Adrenal gland (tissue), 19 donors: ENCODE measurements at regions of chr4 and their contacts with region 1.

Region 1: DNA sequence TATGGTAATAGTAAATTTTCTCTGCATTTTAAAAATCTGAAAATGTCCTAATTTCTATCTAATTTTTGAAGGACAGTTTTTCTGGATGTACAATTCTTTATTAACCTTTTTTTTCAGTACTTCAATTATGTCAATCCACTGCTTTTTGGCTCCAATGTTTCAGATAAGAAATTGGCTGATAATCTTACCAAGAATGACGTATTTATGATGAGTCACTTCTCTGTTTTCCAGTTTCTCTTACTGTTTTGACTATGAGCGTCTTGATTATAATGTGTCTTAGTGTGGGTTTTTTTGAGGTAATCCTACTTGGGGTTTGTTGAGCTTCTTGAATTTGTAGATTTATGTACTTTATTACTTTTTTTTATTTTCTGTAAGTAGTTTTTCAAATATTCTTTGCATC is 47.2 kb downstream of the UGT2B11 start:
- DNase-seq: no peak
- H3K4me3 ChIP-seq: no peak overlapping the region
- H3K27ac ChIP-seq: no peak overlapping the region
- H3K4me1 ChIP-seq: no peaks in the 10 kb centered on the region
- H3K27me3 ChIP-seq: no peaks in the 10 kb centered on the region
- CTCF ChIP-seq: no peak
- POLR2A ChIP-seq: no peak

Region 2: DNA sequence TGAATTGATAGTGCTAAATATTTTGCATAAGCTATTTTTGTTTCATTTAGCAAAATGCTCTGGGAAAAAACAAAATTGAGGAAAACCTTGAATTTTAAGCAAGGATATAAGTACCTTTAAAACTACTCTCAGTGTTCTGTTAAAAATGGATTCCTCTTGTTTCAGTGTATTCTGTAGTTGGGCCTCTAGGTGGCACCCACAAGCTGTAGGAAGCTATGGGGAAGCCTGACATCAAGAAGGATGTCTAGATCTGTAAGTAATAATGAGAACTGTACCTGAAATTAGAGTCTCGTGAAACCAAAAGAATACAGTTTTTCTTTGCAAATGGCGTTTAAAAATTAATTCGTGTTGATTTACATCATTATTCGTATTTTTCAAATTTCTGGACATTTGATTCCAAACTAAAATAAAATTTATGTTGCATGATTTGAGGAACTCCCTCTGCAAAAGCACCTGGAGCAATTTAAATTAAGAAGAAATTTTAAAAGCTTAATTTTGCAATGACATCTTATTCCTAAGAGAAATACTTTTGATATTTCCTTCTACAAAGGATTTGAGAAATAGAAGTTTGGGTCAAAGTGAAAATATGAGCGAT is 668.8 kb before region 1 on chr4:
- intact Hi-C with region 1: loop called in 1 of 2 experiments (anchors 10 kb)
- DNase-seq: peak; percentile 44 to 70 (median 52)
- H3K4me3 ChIP-seq: no peak overlapping the region
- H3K27ac ChIP-seq: no peak overlapping the region
- H3K4me1 ChIP-seq: no peaks in the 10 kb centered on the region
- H3K27me3 ChIP-seq: no peaks in the 10 kb centered on the region
- CTCF ChIP-seq: peak; percentile 43 to 87 (median 71)
- POLR2A ChIP-seq: no peak